SK-N-SH (cell line): ENCODE measurements at regions of chr6 and their contacts with region 1.

Region 1: GRCh38 chr6:107704347-107705013 is 119.6 kb downstream of the SCML4 start:
- DNase-seq: peak; percentile 69
- H3K4me3 ChIP-seq: no peak overlapping the region; a peak in 1 of 4 replicates
- H3K27ac ChIP-seq: no peak overlapping the region; a peak in 1 of 4 replicates
- H3K4me1 ChIP-seq: peaks cover 0 to 3% of the 10 kb centered on the region in 2 experiments; a peak in 1 of 4 replicates
- H3K27me3 ChIP-seq: no peaks in the 10 kb centered on the region
- CTCF ChIP-seq: peak; percentile 83
- EP300 ChIP-seq: no peak
- RAD21 ChIP-seq: peak; percentile 69

Region 2: DNA sequence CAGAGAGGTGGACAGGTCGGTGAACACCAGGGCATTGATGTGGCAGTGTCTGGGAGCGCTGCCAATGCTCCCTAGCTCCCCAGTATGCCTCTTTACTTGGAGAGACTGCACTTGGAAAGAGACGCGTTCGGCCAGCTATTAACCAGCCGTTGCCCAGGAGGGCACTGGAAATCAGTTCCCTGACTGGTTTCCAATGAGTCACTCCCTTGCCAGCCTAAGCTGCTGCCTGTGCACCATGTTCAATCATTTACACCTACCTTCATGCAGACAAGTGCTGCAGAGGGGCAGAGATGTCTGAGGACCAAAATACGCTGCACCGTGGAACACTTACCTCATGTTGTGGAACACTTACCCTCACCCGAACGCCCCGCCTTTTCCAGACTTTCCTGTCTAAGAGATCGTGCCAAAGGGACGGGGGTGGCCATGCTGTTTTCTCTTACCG is 63.0 kb before region 1 on chr6:
- CTCF ChIA-PET with region 1: no interaction called
- POLR2A ChIA-PET with region 1: no interaction called
- DNase-seq: no peak
- H3K4me3 ChIP-seq: no peak overlapping the region
- H3K27ac ChIP-seq: no peak overlapping the region; a peak in 1 of 4 replicates
- H3K4me1 ChIP-seq: peaks cover 0 to 17% of the 10 kb centered on the region in 2 experiments; a peak in 1 of 4 replicates
- H3K27me3 ChIP-seq: no peaks in the 10 kb centered on the region
- CTCF ChIP-seq: no peak
- EP300 ChIP-seq: no peak
- RAD21 ChIP-seq: no peak

Region 3: DNA sequence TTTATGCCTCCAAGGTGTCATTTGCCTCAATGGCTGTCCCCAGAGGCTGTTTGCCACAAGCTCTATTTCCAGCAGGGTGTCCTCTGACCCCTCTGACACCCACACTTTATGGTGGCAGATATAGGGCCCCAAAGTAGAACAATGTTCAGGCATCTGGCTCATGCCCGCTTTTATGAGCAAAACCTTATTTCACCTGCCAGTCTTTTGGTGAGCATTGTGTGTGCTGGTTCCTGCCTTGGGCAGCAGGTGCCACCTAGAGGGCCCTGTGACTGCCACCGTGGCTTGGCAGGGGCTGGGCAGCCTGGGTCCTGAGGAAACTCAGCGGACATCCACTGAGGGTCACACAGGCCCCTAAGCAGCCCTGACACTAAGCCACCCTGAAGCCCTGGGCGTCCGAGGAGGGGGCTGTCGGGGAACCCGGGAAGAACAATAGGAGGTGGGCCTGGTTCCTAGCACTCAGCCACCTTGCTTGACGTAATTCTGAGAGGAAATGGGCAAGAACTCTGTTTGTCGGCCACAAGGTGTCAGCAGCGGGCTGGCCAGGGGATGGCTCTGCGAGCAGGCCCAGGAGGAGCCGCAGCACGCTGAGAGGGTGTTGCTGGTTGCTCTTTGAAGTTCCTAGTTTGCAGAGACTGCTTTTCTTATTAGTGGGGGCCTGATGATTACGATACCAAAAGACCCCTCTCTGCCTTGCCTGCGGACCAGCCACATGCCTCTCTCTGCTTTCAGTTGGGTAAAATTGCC is 29.3 kb before region 1 on chr6:
- CTCF ChIA-PET with region 1: interaction called, 22 read pairs
- POLR2A ChIA-PET with region 1: no interaction called
- DNase-seq: peak; percentile 83
- H3K4me3 ChIP-seq: no peak overlapping the region; a peak in 1 of 4 replicates
- H3K27ac ChIP-seq: peak overlapping the region in 1 of 2 experiments; percentile 64; a peak in 1 of 4 replicates
- H3K4me1 ChIP-seq: peaks cover 0 to 22% of the 10 kb centered on the region in 2 experiments; a peak in 2 of 4 replicates
- H3K27me3 ChIP-seq: no peaks in the 10 kb centered on the region
- CTCF ChIP-seq: peak; percentile 83
- EP300 ChIP-seq: no peak
- RAD21 ChIP-seq: peak; percentile 86

Region 4: GRCh38 chr6:107691062-107691751 is 13.3 kb before region 1 on chr6:
- CTCF ChIA-PET with region 1: interaction called, 36 read pairs
- POLR2A ChIA-PET with region 1: no interaction called
- DNase-seq: no peak
- H3K4me3 ChIP-seq: no peak overlapping the region
- H3K27ac ChIP-seq: no peak overlapping the region
- H3K4me1 ChIP-seq: no peaks in the 10 kb centered on the region
- H3K27me3 ChIP-seq: no peaks in the 10 kb centered on the region
- CTCF ChIP-seq: no peak
- EP300 ChIP-seq: no peak
- RAD21 ChIP-seq: no peak